T-cell (primary cell): ENCODE measurements at regions of chr14 and their contacts with region 1.

Region 1: GRCh38 chr14:100056964-100057795 is 8.0 kb upstream of the EVL start:
- DNase-seq: peak in 6 of 35 experiments; percentile 28 to 80 (median 42)
- ATAC-seq: peak; percentile 75 to 83 (median 80)
- H3K4me3 ChIP-seq: no peak overlapping the region
- H3K4me3 Mint-ChIP-seq: peak overlapping the region in 2 of 3 donors; percentile 41 to 49
- H3K27ac ChIP-seq: no peak overlapping the region
- H3K27ac Mint-ChIP-seq: peak overlapping the region; percentile 90 to 93
- H3K4me1 ChIP-seq: peaks cover 37 to 52% of the 10 kb centered on the region in 2 experiments
- H3K4me1 Mint-ChIP-seq: peaks cover 54 to 67% (median 56%) of the 10 kb centered on the region in 3 donors
- H3K27me3 ChIP-seq: no peaks in the 10 kb centered on the region
- H3K27me3 Mint-ChIP-seq: no peaks in the 10 kb centered on the region

Region 2: DNA sequence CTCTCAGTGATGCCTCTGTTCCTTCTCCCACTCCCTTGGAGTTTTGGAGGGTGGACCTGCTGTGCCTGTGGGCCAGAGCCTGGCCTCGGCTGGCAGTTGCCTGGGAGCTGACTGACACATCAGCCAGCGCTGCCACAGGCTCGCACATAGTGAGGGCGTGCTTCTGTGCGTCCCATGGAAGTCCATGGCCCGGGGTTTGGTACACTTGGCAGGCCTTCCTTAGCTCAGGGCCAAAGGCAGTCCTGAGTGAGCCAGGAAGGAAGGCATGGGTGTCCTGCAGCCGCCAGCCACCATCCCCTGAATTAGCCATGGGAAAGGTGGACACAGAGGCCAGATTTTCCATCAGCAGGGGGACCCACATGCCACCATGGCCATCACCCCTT is 103.3 kb after region 1 on chr14:
- CTCF ChIA-PET with region 1: no interaction called
- POLR2A ChIA-PET with region 1: interaction called in 1 of 2 experiments, 11 read pairs
- DNase-seq: no peak
- ATAC-seq: no peak
- H3K4me3 ChIP-seq: no peak overlapping the region
- H3K4me3 Mint-ChIP-seq: peak overlapping the region; percentile 28 to 68 (median 41)
- H3K27ac ChIP-seq: no peak overlapping the region
- H3K27ac Mint-ChIP-seq: no peak overlapping the region
- H3K4me1 ChIP-seq: peaks cover 6 to 13% of the 10 kb centered on the region in 2 experiments
- H3K4me1 Mint-ChIP-seq: peaks cover 0 to 11% (median 7%) of the 10 kb centered on the region in 3 donors
- H3K27me3 ChIP-seq: peaks cover 5 to 50% of the 10 kb centered on the region in 2 experiments
- H3K27me3 Mint-ChIP-seq: peaks cover 4 to 24% of the 10 kb centered on the region in 2 donors